Body of pancreas (tissue), 4 donors: ENCODE measurements at regions of chr1 and their contacts with region 1.

Region 1: GRCh38 chr1:25895365-25895993 is 10.7 kb downstream of the STMN1 start:
- DNase-seq: peak; percentile 86 to 90 (median 88)
- ATAC-seq: peak; percentile 90
- H3K4me3 ChIP-seq: no peak overlapping the region
- H3K27ac ChIP-seq: no peak overlapping the region
- H3K4me1 ChIP-seq: peaks cover 24% of the 10 kb centered on the region
- H3K27me3 ChIP-seq: no peaks in the 10 kb centered on the region
- CTCF ChIP-seq: peak; percentile 91 to 100 (median 98)
- POLR2A ChIP-seq: peak in 1 of 3 donors; percentile 16

Region 2: DNA sequence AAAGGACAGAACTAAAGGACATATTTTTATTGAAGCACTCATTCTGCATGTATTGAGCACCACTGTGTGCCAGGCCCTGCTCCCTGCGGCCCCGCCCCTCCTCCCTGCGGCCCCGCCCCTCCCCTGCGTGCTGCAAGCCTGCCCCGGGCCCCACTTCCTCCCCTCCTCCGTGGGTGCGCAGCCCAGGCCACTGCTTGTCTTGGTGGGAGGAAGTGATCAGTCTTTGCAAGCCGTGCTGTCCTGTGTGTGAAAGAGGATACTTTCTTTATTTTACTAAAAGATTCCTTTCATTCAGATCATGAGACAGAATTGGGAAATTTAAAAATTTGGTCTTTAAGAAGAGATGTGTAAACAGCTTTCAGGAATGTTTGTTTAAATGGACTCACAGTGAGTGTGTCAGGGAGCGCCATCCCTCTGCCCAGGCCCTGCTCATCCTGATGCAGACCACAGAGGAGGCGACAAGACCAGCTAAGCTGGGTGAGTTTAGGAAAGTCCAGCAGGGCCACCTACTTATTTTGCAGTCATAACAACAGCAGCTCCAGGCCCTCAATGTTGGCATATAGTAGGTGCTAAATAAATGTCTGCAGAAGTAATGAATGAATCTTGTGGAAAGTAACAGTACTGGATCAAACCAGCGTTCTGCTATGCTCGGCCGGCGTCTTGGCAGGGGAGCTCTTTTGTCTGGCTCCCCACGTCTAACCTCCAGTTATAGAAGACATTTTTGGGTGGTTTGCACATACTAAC is 183.8 kb before region 1 on chr1:
- intact Hi-C with region 1: no loop called
- DNase-seq: no peak
- ATAC-seq: no peak
- H3K4me3 ChIP-seq: no peak overlapping the region
- H3K27ac ChIP-seq: no peak overlapping the region
- H3K4me1 ChIP-seq: peaks cover 21% of the 10 kb centered on the region
- H3K27me3 ChIP-seq: no peaks in the 10 kb centered on the region
- CTCF ChIP-seq: no peak
- POLR2A ChIP-seq: no peak

Region 3: GRCh38 chr1:25837262-25837875 is 58.1 kb before region 1 on chr1:
- intact Hi-C with region 1: no loop called
- DNase-seq: peak in 1 of 4 donors; percentile 59
- ATAC-seq: peak; percentile 93
- H3K4me3 ChIP-seq: no peak overlapping the region
- H3K27ac ChIP-seq: peak overlapping the region in 3 of 4 donors; percentile 13 to 52 (median 26)
- H3K4me1 ChIP-seq: peaks cover 14% of the 10 kb centered on the region
- H3K27me3 ChIP-seq: no peaks in the 10 kb centered on the region
- CTCF ChIP-seq: peak; percentile 38 to 81 (median 73)
- POLR2A ChIP-seq: no peak

Region 4: GRCh38 chr1:26003262-26003661 is 107.8 kb after region 1 on chr1:
- intact Hi-C with region 1: loop called (anchors 5 kb)
- DNase-seq: no peak
- ATAC-seq: no peak
- H3K4me3 ChIP-seq: no peak overlapping the region
- H3K27ac ChIP-seq: no peak overlapping the region
- H3K4me1 ChIP-seq: peaks cover 11% of the 10 kb centered on the region
- H3K27me3 ChIP-seq: no peaks in the 10 kb centered on the region
- CTCF ChIP-seq: no peak
- POLR2A ChIP-seq: no peak